CD8-positive, alpha-beta T cell (primary cell): ENCODE measurements at regions of chr3 and their contacts with region 1.

Region 1: GRCh38 chr3:195259475-195260279 is 11.3 kb downstream of the XXYLT1 start:
- DNase-seq: peak; percentile 82 to 95 (median 93)
- ATAC-seq: peak; percentile 91
- H3K4me3 ChIP-seq: peak overlapping the region; percentile 74 to 86
- H3K4me3 Mint-ChIP-seq: peak overlapping the region; percentile 72
- H3K27ac ChIP-seq: peak overlapping the region; percentile 60 to 86
- H3K27ac Mint-ChIP-seq: peak overlapping the region; percentile 87
- H3K4me1 ChIP-seq: peaks cover 32% of the 10 kb centered on the region
- H3K4me1 Mint-ChIP-seq: peaks cover 18% of the 10 kb centered on the region
- H3K27me3 ChIP-seq: no peaks in the 10 kb centered on the region
- H3K27me3 Mint-ChIP-seq: no peaks in the 10 kb centered on the region
- CTCF ChIP-seq: peak; percentile 71

Region 2: GRCh38 chr3:194472290-194472920 is 787.3 kb before region 1 on chr3:
- CTCF ChIA-PET with region 1: no interaction called
- POLR2A ChIA-PET with region 1: no interaction called
- intact Hi-C with region 1: loop called in 1 of 2 experiments (anchors 5 kb)
- DNase-seq: peak in 3 of 9 experiments; percentile 21 to 76 (median 65)
- ATAC-seq: peak; percentile 96
- H3K4me3 ChIP-seq: no peak overlapping the region
- H3K4me3 Mint-ChIP-seq: no peak overlapping the region
- H3K27ac ChIP-seq: no peak overlapping the region
- H3K27ac Mint-ChIP-seq: no peak overlapping the region
- H3K4me1 ChIP-seq: no peaks in the 10 kb centered on the region
- H3K4me1 Mint-ChIP-seq: peaks cover 7% of the 10 kb centered on the region
- H3K27me3 ChIP-seq: no peaks in the 10 kb centered on the region
- H3K27me3 Mint-ChIP-seq: no peaks in the 10 kb centered on the region
- CTCF ChIP-seq: peak; percentile 99

Region 3: GRCh38 chr3:194769020-194769643 is 490.5 kb before region 1 on chr3:
- CTCF ChIA-PET with region 1: no interaction called
- POLR2A ChIA-PET with region 1: no interaction called
- intact Hi-C with region 1: loop called (anchors 1 to 2 kb)
- DNase-seq: peak; percentile 82 to 98 (median 89)
- ATAC-seq: peak; percentile 96
- H3K4me3 ChIP-seq: peak overlapping the region; percentile 45 to 51
- H3K4me3 Mint-ChIP-seq: peak overlapping the region; percentile 84
- H3K27ac ChIP-seq: peak overlapping the region; percentile 15 to 71
- H3K27ac Mint-ChIP-seq: peak overlapping the region; percentile 92
- H3K4me1 ChIP-seq: peaks cover 11% of the 10 kb centered on the region
- H3K4me1 Mint-ChIP-seq: peaks cover 26% of the 10 kb centered on the region
- H3K27me3 ChIP-seq: peaks cover 0 to 2% of the 10 kb centered on the region in 2 experiments
- H3K27me3 Mint-ChIP-seq: peaks cover 7% of the 10 kb centered on the region
- CTCF ChIP-seq: no peak

Region 4: GRCh38 chr3:195001961-195002861 is 257.5 kb before region 1 on chr3:
- CTCF ChIA-PET with region 1: no interaction called
- POLR2A ChIA-PET with region 1: no interaction called
- intact Hi-C with region 1: loop called (anchors 1 kb)
- DNase-seq: peak in 4 of 9 experiments; percentile 21 to 51 (median 42)
- ATAC-seq: peak; percentile 46
- H3K4me3 ChIP-seq: no peak overlapping the region
- H3K4me3 Mint-ChIP-seq: no peak overlapping the region
- H3K27ac ChIP-seq: no peak overlapping the region
- H3K27ac Mint-ChIP-seq: no peak overlapping the region
- H3K4me1 ChIP-seq: peaks cover 4% of the 10 kb centered on the region
- H3K4me1 Mint-ChIP-seq: no peaks in the 10 kb centered on the region
- H3K27me3 ChIP-seq: no peaks in the 10 kb centered on the region
- H3K27me3 Mint-ChIP-seq: peaks cover 8% of the 10 kb centered on the region
- CTCF ChIP-seq: no peak

Region 5: GRCh38 chr3:195106418-195106906 is 153.2 kb before region 1 on chr3:
- CTCF ChIA-PET with region 1: interaction called, 9 read pairs
- POLR2A ChIA-PET with region 1: interaction called, 5 read pairs
- intact Hi-C with region 1: loop called (anchors 1 to 5 kb)
- DNase-seq: peak; percentile 42 to 85 (median 66)
- ATAC-seq: peak; percentile 100
- H3K4me3 ChIP-seq: peak overlapping the region in 1 of 2 experiments; percentile 44
- H3K4me3 Mint-ChIP-seq: peak overlapping the region; percentile 51
- H3K27ac ChIP-seq: no peak overlapping the region
- H3K27ac Mint-ChIP-seq: no peak overlapping the region
- H3K4me1 ChIP-seq: no peaks in the 10 kb centered on the region
- H3K4me1 Mint-ChIP-seq: peaks cover 4% of the 10 kb centered on the region
- H3K27me3 ChIP-seq: no peaks in the 10 kb centered on the region
- H3K27me3 Mint-ChIP-seq: no peaks in the 10 kb centered on the region
- CTCF ChIP-seq: peak; percentile 99

Region 6: DNA sequence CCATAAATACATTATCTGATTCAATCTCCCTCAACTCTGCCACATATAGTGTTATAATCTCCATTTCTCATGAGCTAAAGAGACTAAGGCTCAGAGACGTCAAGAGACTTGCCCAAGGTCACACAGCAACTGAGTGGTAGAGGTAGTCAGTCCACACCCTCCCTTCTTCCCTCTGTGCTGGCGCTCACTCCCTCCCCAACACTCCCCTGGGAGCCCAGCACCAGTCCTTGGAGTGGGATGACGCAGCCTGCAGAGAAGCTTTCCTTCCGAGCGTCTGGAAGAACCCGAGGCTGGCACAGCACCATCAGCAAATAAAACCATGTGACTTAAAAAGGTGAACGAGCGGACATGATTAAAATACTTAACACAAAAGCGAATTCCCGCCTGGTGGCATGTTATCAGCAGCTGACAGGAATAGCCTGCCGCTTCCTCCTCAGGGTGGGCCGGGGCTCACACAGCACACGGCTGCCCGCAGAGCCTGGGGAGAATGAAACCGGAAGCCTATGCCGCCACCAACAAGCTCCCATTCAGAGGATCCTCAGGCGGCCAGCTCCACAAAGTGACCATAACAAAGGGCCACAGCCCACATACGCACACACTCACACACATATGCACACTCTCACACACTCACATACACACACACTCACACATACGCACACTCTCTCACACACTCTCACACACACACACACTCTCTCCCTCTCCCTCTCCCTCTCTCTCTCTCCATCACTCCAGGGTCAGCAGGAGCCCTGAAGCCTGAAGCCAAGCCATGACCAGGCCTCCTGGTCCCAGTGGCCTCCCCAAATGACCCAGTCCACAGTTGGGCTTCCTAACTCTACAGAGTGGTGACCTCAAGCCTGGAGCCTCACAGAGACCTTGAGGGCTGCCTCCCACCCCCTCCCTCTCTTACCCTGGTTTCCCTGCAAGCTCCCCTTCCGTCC is 109.2 kb before region 1 on chr3:
- CTCF ChIA-PET with region 1: no interaction called
- POLR2A ChIA-PET with region 1: no interaction called
- intact Hi-C with region 1: loop called in 1 of 2 experiments (anchors 1 kb)
- DNase-seq: peak in 6 of 9 experiments; percentile 35 to 63 (median 48)
- ATAC-seq: peak; percentile 60
- H3K4me3 ChIP-seq: peak overlapping the region; percentile 27 to 37
- H3K4me3 Mint-ChIP-seq: peak overlapping the region; percentile 85
- H3K27ac ChIP-seq: peak overlapping the region in 1 of 2 experiments; percentile 40
- H3K27ac Mint-ChIP-seq: peak overlapping the region; percentile 79
- H3K4me1 ChIP-seq: peaks cover 32% of the 10 kb centered on the region
- H3K4me1 Mint-ChIP-seq: peaks cover 52% of the 10 kb centered on the region
- H3K27me3 ChIP-seq: no peaks in the 10 kb centered on the region
- H3K27me3 Mint-ChIP-seq: no peaks in the 10 kb centered on the region
- CTCF ChIP-seq: no peak